ENCODE measurements at regions of chr2 and their contacts with region 1.

Region 1: DNA sequence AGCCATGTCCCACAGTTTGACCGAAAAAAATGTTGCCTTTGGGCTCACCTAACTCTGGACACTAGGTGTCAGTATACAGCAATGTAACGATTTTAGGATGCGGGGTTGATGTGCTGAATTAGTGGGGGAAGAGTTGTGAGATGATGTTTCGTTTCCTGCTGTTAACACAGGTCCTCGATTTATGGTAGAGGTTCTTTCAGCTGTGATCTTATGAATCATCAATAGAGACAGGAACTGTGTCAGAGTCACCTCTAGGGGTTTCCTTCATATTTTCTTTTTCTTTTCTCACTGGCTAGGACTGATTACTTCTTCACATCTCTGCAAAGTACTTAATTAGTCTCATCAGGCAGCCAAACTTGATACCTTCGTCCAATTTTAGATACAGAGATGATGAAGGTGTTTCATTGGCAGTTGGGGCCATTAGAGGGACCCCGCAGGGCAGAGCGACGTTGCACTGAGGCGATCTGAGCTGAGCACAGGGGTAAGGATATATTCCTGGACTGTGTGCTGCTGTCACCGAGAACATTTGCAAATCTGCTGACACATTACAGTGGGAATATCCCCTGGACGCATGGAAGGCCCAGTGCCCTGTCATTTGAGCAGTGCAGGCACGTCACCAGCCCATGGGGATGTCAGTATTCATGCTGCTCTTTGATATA is 10.2 kb upstream of the MMADHC start:
- DNase-seq: peak; percentile 46
- H3K4me3 Mint-ChIP-seq: no peak overlapping the region
- H3K27ac Mint-ChIP-seq: no peak overlapping the region
- H3K4me1 Mint-ChIP-seq: peaks cover 27% of the 10 kb centered on the region
- H3K27me3 Mint-ChIP-seq: peaks cover 13% of the 10 kb centered on the region

Region 2: GRCh38 chr2:149561309-149561926 is 36.4 kb before region 1 on chr2:
- intact Hi-C with region 1: no loop called
- DNase-seq: no peak
- H3K4me3 Mint-ChIP-seq: no peak overlapping the region
- H3K27ac Mint-ChIP-seq: no peak overlapping the region
- H3K4me1 Mint-ChIP-seq: no peaks in the 10 kb centered on the region
- H3K27me3 Mint-ChIP-seq: peaks cover 5% of the 10 kb centered on the region

Region 3: GRCh38 chr2:149587220-149587949 is 10.4 kb before region 1 on chr2 and contains the start of gene MMADHC:
- intact Hi-C with region 1: loop called (anchors 1 kb)
- DNase-seq: peak; percentile 91
- H3K4me3 Mint-ChIP-seq: peak within 1 kb of the TSS; percentile 99
- H3K27ac Mint-ChIP-seq: peak within 1 kb of the TSS; percentile 98
- H3K4me1 Mint-ChIP-seq: peaks cover 36% of the 10 kb centered on the region
- H3K27me3 Mint-ChIP-seq: peaks cover 15% of the 10 kb centered on the region
- total RNA-seq, gene MMADHC: 125 and 126 TPM in 2 replicates

Region 4: GRCh38 chr2:150023044-150023443 is 425.2 kb after region 1 on chr2:
- intact Hi-C with region 1: loop called (anchors 2 kb)
- DNase-seq: peak; percentile 9
- H3K4me3 Mint-ChIP-seq: no peak overlapping the region
- H3K27ac Mint-ChIP-seq: no peak overlapping the region
- H3K4me1 Mint-ChIP-seq: no peaks in the 10 kb centered on the region
- H3K27me3 Mint-ChIP-seq: no peaks in the 10 kb centered on the region

Region 5: DNA sequence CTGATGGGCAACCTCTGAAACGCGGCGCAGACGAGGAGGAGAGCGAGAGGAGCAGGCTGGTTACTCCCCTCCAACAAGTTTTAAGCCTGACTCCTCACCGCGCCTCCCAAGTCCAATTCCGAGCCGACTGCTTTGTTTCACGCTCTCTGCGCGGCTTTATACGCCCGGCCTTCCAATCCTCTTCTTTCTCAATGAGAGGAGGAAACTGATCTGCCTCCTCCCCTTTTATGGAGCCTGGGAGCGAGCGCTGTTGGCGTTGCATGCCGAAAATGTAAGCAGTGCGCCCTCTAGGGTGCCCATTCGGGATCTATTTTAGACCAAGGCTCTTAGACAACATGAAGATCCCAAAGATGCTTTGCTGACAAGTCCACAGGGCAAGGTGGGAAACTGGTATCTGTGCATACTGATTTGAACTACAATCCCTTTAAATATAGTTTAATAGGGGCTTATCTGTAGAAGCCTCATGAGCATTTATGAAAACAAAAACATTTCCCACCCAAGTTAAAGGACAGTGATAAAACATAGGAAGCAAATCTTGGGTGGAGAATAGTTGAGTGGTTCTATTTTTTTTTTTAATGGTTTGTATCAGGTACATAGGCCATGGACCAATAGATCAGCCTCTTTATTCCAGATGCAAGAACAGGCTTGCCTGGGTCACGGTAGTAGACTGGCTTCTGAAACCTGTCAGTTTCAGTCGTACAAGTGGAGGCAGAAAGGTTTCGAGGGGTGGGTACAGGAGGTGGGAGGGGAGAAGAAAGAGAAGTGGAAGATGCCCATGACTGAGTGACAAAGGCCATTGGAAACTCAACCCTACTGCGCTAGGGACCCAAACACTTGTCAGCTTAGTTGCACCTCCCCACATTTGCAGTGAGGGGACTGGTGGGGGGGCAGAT is 890.0 kb after region 1 on chr2 and contains the start of gene RND3:
- intact Hi-C with region 1: loop called (anchors 1 kb)
- DNase-seq: peak; percentile 29
- H3K4me3 Mint-ChIP-seq: peak within 1 kb of the TSS; percentile 63
- H3K27ac Mint-ChIP-seq: no peak within 1 kb of the TSS
- H3K4me1 Mint-ChIP-seq: peaks cover 12% of the 10 kb centered on the region
- H3K27me3 Mint-ChIP-seq: peaks cover 45% of the 10 kb centered on the region
- total RNA-seq, gene RND3: not detected in 2 replicates

Region 6: GRCh38 chr2:151238527-151239487 is 1641.0 kb after region 1 on chr2:
- intact Hi-C with region 1: loop called (anchors 1 kb)
- DNase-seq: no peak
- H3K4me3 Mint-ChIP-seq: no peak overlapping the region
- H3K27ac Mint-ChIP-seq: no peak overlapping the region
- H3K4me1 Mint-ChIP-seq: no peaks in the 10 kb centered on the region
- H3K27me3 Mint-ChIP-seq: peaks cover 11% of the 10 kb centered on the region